MCF 10A (cell line): ENCODE measurements at regions of chr1 and their contacts with region 1.

Region 1: GRCh38 chr1:163321311-163322305 is at the start of gene NUF2:
- DNase-seq: peak; percentile 100
- H3K4me3 Mint-ChIP-seq: peak within 1 kb of the TSS; percentile 95
- H3K27ac Mint-ChIP-seq: peak within 1 kb of the TSS; percentile 98
- H3K4me1 Mint-ChIP-seq: peaks cover 26% of the 10 kb centered on the region
- H3K27me3 Mint-ChIP-seq: no peaks in the 10 kb centered on the region
- CTCF ChIP-seq: no peak
- total RNA-seq, gene NUF2: 14.7 and 23.8 TPM in 2 replicates

Region 2: GRCh38 chr1:162497723-162498500 is 823.7 kb before region 1 on chr1 and contains the start of gene UHMK1:
- CTCF ChIA-PET with region 1: no interaction called
- POLR2A ChIA-PET with region 1: no interaction called
- intact Hi-C with region 1: loop called (anchors 5 kb)
- DNase-seq: peak; percentile 97
- H3K4me3 Mint-ChIP-seq: peak within 1 kb of the TSS; percentile 91
- H3K27ac Mint-ChIP-seq: peak within 1 kb of the TSS; percentile 82
- H3K4me1 Mint-ChIP-seq: peaks cover 12% of the 10 kb centered on the region
- H3K27me3 Mint-ChIP-seq: peaks cover 8% of the 10 kb centered on the region
- CTCF ChIP-seq: no peak
- total RNA-seq, gene UHMK1: 76.9 and 102 TPM in 2 replicates

Region 3: GRCh38 chr1:163250382-163250974 is 71.1 kb before region 1 on chr1:
- CTCF ChIA-PET with region 1: no interaction called
- POLR2A ChIA-PET with region 1: no interaction called
- intact Hi-C with region 1: no loop called
- DNase-seq: no peak
- H3K4me3 Mint-ChIP-seq: no peak overlapping the region
- H3K27ac Mint-ChIP-seq: no peak overlapping the region
- H3K4me1 Mint-ChIP-seq: no peaks in the 10 kb centered on the region
- H3K27me3 Mint-ChIP-seq: no peaks in the 10 kb centered on the region
- CTCF ChIP-seq: no peak

Region 4: DNA sequence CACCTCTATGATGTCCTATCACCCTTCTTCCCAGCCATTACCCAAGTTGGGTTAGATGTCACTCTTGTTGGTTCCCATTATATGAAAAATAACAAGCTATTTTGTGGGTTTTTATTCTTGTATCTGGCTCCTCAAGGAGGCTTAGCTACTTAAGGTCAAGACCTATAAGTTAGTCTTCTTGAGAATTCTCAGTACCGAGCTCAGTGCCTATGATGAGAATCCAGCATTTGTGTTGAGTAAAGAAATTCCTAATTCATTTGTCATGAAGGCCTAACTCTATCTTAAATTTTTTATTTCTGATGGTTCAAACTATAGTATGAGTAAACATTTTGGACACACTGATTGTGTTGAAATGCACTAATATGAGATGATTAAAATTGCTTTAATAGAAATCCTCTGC is 16.0 kb after region 1 on chr1:
- CTCF ChIA-PET with region 1: interaction called, 5 read pairs
- POLR2A ChIA-PET with region 1: interaction called, 16 read pairs
- intact Hi-C with region 1: no loop called
- DNase-seq: no peak
- H3K4me3 Mint-ChIP-seq: no peak overlapping the region
- H3K27ac Mint-ChIP-seq: no peak overlapping the region
- H3K4me1 Mint-ChIP-seq: no peaks in the 10 kb centered on the region
- H3K27me3 Mint-ChIP-seq: no peaks in the 10 kb centered on the region
- CTCF ChIP-seq: no peak